Naive thymus-derived CD4-positive, alpha-beta T cell (primary cell): ENCODE measurements at regions of chr6 and their contacts with region 1.

Region 1: DNA sequence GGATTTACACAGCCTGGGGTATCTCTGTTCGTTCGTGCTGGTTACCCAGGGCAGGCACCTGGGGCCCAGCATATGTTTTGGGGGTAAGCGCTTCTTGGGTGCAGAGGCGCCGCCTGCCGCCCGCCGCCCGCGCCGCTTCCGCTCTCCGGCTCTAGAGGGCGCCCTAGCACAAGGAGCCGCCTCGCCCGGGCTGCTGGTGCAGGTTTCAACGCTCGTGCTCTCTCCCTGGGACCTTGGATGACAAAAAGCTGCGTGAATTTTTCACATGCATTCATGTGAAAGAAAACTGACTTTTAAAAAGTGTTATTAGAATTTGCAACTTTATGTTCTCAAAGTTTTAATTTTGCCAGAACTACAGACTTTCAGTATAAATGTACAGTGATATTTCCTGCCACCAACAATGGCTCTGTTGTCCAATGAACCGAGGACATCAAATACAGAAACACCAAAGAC is 32.5 kb downstream of the PRR18 start:
- DNase-seq: peak; percentile 49 to 92 (median 78)
- ATAC-seq: peak; percentile 95
- H3K4me3 ChIP-seq: no peak overlapping the region
- H3K4me3 Mint-ChIP-seq: peak overlapping the region in 1 of 10 donors; percentile 35
- H3K27ac ChIP-seq: no peak overlapping the region
- H3K27ac Mint-ChIP-seq: peak overlapping the region in 4 of 9 donors; percentile 30 to 85 (median 74)
- H3K4me1 ChIP-seq: peaks cover 0 to 4% of the 10 kb centered on the region in 2 donors
- H3K4me1 Mint-ChIP-seq: peaks cover 0 to 7% (median 6%) of the 10 kb centered on the region in 7 donors
- H3K27me3 ChIP-seq: no peaks in the 10 kb centered on the region
- H3K27me3 Mint-ChIP-seq: peaks cover 0 to 15% (median 0%) of the 10 kb centered on the region in 5 donors

Region 2: GRCh38 chr6:166156942-166157341 is 118.8 kb before region 1 on chr6:
- CTCF ChIA-PET with region 1: interaction called, 3 read pairs
- POLR2A ChIA-PET with region 1: no interaction called
- intact Hi-C with region 1: loop called in 1 of 2 experiments (anchors 1 kb)
- DNase-seq: no peak
- ATAC-seq: no peak
- H3K4me3 ChIP-seq: no peak overlapping the region
- H3K4me3 Mint-ChIP-seq: no peak overlapping the region
- H3K27ac ChIP-seq: no peak overlapping the region
- H3K27ac Mint-ChIP-seq: no peak overlapping the region
- H3K4me1 ChIP-seq: no peaks in the 10 kb centered on the region
- H3K4me1 Mint-ChIP-seq: no peaks in the 10 kb centered on the region
- H3K27me3 ChIP-seq: no peaks in the 10 kb centered on the region
- H3K27me3 Mint-ChIP-seq: peaks cover 4 to 33% (median 6%) of the 10 kb centered on the region in 5 donors

Region 3: DNA sequence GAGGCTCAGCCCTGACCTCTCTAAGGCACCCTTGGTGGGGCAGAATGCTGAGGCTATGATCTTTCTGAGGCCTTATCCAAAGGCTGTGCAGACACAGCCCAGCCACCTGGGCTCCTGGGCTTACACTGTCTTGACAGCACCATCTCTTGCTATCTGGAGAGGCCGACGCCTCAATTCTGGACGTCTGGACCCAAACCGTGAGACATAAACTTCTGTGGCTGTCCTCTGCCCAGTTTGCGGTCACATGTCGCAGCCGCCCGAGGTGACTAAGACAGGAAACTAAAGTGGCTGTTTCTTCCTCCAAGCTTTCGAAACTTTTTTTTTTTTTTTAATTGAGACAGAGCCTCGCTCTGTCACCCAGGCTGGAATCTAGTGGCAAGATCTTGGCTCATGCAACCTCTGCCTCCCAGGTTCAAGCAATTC is 16.9 kb before region 1 on chr6:
- CTCF ChIA-PET with region 1: no interaction called
- POLR2A ChIA-PET with region 1: no interaction called
- intact Hi-C with region 1: loop called in 1 of 2 experiments (anchors 1 kb)
- DNase-seq: peak in 2 of 9 donors; percentile 20 to 21
- ATAC-seq: peak; percentile 84
- H3K4me3 ChIP-seq: no peak overlapping the region
- H3K4me3 Mint-ChIP-seq: peak overlapping the region in 9 of 10 donors; percentile 36 to 78 (median 75)
- H3K27ac ChIP-seq: no peak overlapping the region
- H3K27ac Mint-ChIP-seq: peak overlapping the region in 8 of 9 donors; percentile 75 to 99 (median 92)
- H3K4me1 ChIP-seq: peaks cover 8 to 22% of the 10 kb centered on the region in 2 donors
- H3K4me1 Mint-ChIP-seq: peaks cover 0 to 66% (median 42%) of the 10 kb centered on the region in 7 donors
- H3K27me3 ChIP-seq: no peaks in the 10 kb centered on the region
- H3K27me3 Mint-ChIP-seq: peaks cover 0 to 54% (median 34%) of the 10 kb centered on the region in 5 donors

Region 4: GRCh38 chr6:166342349-166343149 is 66.8 kb after region 1 on chr6 and contains the start of gene SFT2D1:
- CTCF ChIA-PET with region 1: no interaction called
- POLR2A ChIA-PET with region 1: no interaction called
- intact Hi-C with region 1: loop called in 1 of 2 experiments (anchors 5 kb)
- DNase-seq: peak; percentile 33 to 87 (median 47)
- ATAC-seq: peak; percentile 88
- H3K4me3 ChIP-seq: peak within 1 kb of the TSS; percentile 94
- H3K4me3 Mint-ChIP-seq: peak within 1 kb of the TSS in 8 of 10 donors; percentile 83 to 94 (median 90)
- H3K27ac ChIP-seq: peak within 1 kb of the TSS; percentile 79
- H3K27ac Mint-ChIP-seq: peak within 1 kb of the TSS; percentile 72 to 95 (median 84)
- H3K4me1 ChIP-seq: peaks cover 32 to 37% of the 10 kb centered on the region in 2 donors
- H3K4me1 Mint-ChIP-seq: peaks cover 4 to 18% (median 8%) of the 10 kb centered on the region in 7 donors
- H3K27me3 ChIP-seq: no peaks in the 10 kb centered on the region
- H3K27me3 Mint-ChIP-seq: peaks cover 0 to 10% (median 0%) of the 10 kb centered on the region in 5 donors
- total RNA-seq, gene SFT2D1: 18.3 to 50.1 (median 33.7) TPM

Region 5: DNA sequence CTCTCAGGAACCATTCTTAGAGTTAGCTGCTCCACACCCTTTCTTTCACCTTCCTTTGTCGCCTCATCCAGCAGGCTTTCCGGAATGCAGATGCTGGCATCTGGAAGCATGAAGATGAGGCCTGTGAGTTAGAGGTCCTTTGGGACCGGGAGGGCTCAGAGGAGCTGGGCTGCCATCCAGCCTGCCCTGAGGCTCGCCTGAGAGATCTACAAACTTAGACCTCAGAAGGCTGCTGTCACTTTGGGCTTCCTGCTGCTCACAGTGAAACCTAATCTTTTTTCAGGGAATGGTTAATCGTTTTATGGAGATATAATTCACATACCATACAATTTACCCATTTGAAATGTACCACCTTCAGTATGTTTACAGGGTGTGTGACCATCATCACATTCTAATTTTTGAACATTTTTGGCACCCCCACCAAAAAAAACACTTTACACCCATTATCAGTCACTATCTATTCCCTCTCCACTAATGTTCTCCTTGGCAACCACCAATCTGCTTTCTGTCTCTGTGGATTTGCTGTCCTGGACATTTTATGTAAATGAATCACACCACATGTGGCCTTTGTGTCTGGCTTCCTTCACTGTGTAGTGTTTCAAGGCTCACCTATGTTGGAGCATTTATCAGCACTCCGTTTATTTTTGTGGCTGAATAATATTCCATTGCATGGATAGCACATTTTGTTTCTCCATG is 127.0 kb after region 1 on chr6:
- CTCF ChIA-PET with region 1: interaction called, 34 read pairs
- POLR2A ChIA-PET with region 1: interaction called, 5 read pairs
- intact Hi-C with region 1: loop called (anchors 1 kb)
- DNase-seq: no peak
- ATAC-seq: no peak
- H3K4me3 ChIP-seq: no peak overlapping the region
- H3K4me3 Mint-ChIP-seq: no peak overlapping the region
- H3K27ac ChIP-seq: no peak overlapping the region
- H3K27ac Mint-ChIP-seq: peak overlapping the region in 5 of 9 donors; percentile 19 to 77 (median 54)
- H3K4me1 ChIP-seq: peaks cover 4 to 6% of the 10 kb centered on the region in 2 donors
- H3K4me1 Mint-ChIP-seq: peaks cover 0 to 7% (median 4%) of the 10 kb centered on the region in 7 donors
- H3K27me3 ChIP-seq: no peaks in the 10 kb centered on the region
- H3K27me3 Mint-ChIP-seq: peaks cover 0 to 6% (median 4%) of the 10 kb centered on the region in 5 donors

Region 6: GRCh38 chr6:166512567-166512966 is 236.8 kb after region 1 on chr6:
- CTCF ChIA-PET with region 1: no interaction called
- POLR2A ChIA-PET with region 1: no interaction called
- intact Hi-C with region 1: loop called in 1 of 2 experiments (anchors 1 kb)
- DNase-seq: peak in 4 of 9 donors; percentile 7 to 32 (median 30)
- ATAC-seq: peak; percentile 83
- H3K4me3 ChIP-seq: no peak overlapping the region
- H3K4me3 Mint-ChIP-seq: no peak overlapping the region
- H3K27ac ChIP-seq: no peak overlapping the region
- H3K27ac Mint-ChIP-seq: peak overlapping the region in 2 of 9 donors; percentile 10 to 28
- H3K4me1 ChIP-seq: peaks cover 0 to 4% of the 10 kb centered on the region in 2 donors
- H3K4me1 Mint-ChIP-seq: peaks cover 0 to 10% (median 6%) of the 10 kb centered on the region in 7 donors
- H3K27me3 ChIP-seq: no peaks in the 10 kb centered on the region
- H3K27me3 Mint-ChIP-seq: no peaks in the 10 kb centered on the region

Region 7: DNA sequence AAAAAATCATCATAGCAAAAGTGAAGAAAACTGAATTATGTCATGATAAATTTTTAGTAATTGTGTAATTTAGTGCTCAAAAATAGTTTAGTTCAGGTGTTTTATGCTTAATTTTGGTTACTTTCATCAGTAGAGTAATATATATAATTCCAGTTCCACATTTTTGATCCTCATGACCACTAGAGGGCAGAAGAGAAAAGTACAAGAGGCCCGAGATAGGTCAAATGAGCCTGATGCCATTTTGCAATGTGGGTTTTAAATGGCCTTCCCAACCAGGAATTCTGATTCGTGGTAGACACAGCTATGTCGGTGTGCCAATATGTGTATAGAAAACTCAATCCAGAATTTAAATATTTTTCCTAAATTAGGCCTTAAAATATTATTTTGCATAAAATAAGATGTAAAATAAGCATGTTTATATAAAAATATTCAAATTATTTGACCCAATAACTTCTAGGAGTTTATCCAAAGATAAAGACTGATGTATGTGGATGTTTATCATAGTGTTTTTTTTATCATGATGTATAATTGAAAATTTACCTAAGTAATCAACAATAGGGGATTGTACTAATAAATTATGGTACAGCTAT is 511.1 kb after region 1 on chr6:
- CTCF ChIA-PET with region 1: no interaction called
- POLR2A ChIA-PET with region 1: no interaction called
- intact Hi-C with region 1: loop called in 1 of 2 experiments (anchors 5 kb)
- DNase-seq: peak in 7 of 9 donors; percentile 42 to 70 (median 59)
- ATAC-seq: peak; percentile 78
- H3K4me3 ChIP-seq: no peak overlapping the region
- H3K4me3 Mint-ChIP-seq: no peak overlapping the region
- H3K27ac ChIP-seq: no peak overlapping the region
- H3K27ac Mint-ChIP-seq: no peak overlapping the region
- H3K4me1 ChIP-seq: no peaks in the 10 kb centered on the region
- H3K4me1 Mint-ChIP-seq: no peaks in the 10 kb centered on the region
- H3K27me3 ChIP-seq: no peaks in the 10 kb centered on the region
- H3K27me3 Mint-ChIP-seq: peaks cover 0 to 13% (median 0%) of the 10 kb centered on the region in 5 donors